Activated CD4-positive, alpha-beta memory T cell treated with anti-CD3 and anti-CD28 coated beads for 36 hours (primary cell): ENCODE measurements at regions of chr6 and their contacts with region 1.

Region 1: DNA sequence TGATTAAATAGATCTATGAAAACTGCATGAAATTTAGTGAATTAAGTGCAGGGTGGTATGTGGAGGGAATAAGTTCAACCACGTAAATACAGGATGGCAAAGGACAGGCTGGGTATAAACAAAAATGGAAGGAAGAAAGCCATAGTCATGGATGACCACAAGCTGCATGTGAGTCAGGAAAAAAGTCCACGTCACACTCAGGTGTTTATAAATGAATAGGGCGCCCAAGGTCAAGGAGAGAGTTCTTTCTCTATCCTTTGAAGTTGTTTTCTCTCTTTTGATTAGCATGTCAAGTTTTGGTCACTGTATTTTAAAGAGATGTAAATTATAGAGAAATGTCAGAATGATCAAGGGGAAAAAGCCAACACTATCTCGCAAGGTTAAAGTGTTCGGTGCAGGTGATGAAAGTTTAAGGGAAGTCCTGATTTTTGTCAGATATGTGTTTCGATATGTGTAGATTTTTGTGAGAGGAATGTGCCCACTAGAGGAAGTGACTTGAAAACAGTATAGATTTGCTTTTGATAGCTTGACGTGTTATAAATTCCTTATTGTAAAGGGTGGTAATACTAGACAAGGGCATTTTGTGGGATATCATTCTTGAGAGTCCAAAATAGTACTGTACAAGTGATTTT is 58.7 kb downstream of the MAP3K4 start:
- DNase-seq: peak; percentile 31
- H3K4me3 Mint-ChIP-seq: peak overlapping the region; percentile 49
- H3K27ac Mint-ChIP-seq: peak overlapping the region; percentile 53
- H3K4me1 Mint-ChIP-seq: peaks cover 19% of the 10 kb centered on the region
- H3K27me3 Mint-ChIP-seq: no peaks in the 10 kb centered on the region

Region 2: GRCh38 chr6:161038229-161039031 is 11.8 kb before region 1 on chr6:
- CTCF ChIA-PET with region 1: interaction called, 6 read pairs
- POLR2A ChIA-PET with region 1: no interaction called
- intact Hi-C with region 1: loop called (anchors 1 kb)
- DNase-seq: no peak
- H3K4me3 Mint-ChIP-seq: no peak overlapping the region
- H3K27ac Mint-ChIP-seq: no peak overlapping the region
- H3K4me1 Mint-ChIP-seq: peaks cover 42% of the 10 kb centered on the region
- H3K27me3 Mint-ChIP-seq: no peaks in the 10 kb centered on the region